ENCODE measurements at regions of chr19 and their contacts with region 1.

Region 1: GRCh38 chr19:7348587-7349230 is at the start of gene ARHGEF18:
- DNase-seq: peak; percentile 34 to 94 (median 72)
- ATAC-seq: peak; percentile 73
- H3K4me3 ChIP-seq: peak within 1 kb of the TSS; percentile 84
- H3K4me3 Mint-ChIP-seq: peak within 1 kb of the TSS; percentile 99
- H3K27ac ChIP-seq: peak within 1 kb of the TSS; percentile 63 to 74
- H3K27ac Mint-ChIP-seq: peak within 1 kb of the TSS; percentile 92
- H3K4me1 ChIP-seq: peaks cover 78% of the 10 kb centered on the region
- H3K4me1 Mint-ChIP-seq: peaks cover 74% of the 10 kb centered on the region
- H3K27me3 ChIP-seq: no peaks in the 10 kb centered on the region
- H3K27me3 Mint-ChIP-seq: no peaks in the 10 kb centered on the region
- CTCF ChIP-seq: no peak
- total RNA-seq, gene ARHGEF18: 121 TPM

Region 2: DNA sequence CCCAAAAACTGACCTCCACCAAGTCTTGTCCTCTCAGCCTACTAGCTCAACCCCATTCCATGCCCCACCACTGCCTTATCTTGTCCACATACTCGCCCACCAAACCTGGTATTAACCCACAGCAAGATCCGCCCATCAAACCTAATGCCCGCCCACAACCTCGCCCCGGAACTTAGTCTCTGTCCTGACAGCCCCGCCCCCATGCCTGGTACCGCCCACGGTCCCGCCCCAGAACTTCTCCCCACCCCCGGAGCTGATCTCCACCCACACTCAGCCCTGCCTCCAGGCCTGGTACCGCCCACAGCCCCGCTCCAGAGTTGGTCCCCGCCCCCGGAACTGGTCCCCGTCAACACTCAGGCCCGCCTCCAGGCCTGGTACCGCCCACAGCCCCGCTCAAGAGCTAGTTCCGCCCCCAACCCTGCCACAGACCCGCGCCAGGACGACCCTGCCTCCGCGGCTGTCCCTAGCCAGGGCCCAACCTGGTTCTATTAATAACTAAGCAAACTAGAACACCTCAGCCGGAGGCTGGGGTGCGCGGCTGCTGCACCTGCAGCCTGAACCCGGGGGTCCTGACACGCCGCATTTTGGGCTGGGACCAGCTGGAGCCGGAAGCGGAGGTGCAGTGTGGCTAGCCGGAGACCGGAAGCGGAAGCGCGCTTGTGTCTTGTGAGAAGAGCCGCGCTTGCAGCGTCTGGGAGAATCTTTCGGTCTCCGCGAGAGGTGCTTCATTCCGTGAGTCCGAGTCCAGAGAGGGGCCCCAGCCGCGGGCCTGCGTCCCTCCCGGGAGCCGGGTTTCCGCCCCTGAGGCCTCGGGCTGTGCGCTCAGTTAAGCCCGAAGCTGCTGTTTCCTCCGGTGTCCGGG is 279.4 kb before region 1 on chr19 and contains the start of gene ZNF557:
- CTCF ChIA-PET with region 1: no interaction called
- POLR2A ChIA-PET with region 1: interaction called, 21 read pairs
- intact Hi-C with region 1: no loop called
- DNase-seq: peak; percentile 98 to 100 (median 99)
- ATAC-seq: peak; percentile 95
- H3K4me3 ChIP-seq: peak within 1 kb of the TSS; percentile 88
- H3K4me3 Mint-ChIP-seq: peak within 1 kb of the TSS; percentile 96
- H3K27ac ChIP-seq: peak within 1 kb of the TSS; percentile 85 to 89
- H3K27ac Mint-ChIP-seq: peak within 1 kb of the TSS; percentile 91
- H3K4me1 ChIP-seq: peaks cover 21% of the 10 kb centered on the region
- H3K4me1 Mint-ChIP-seq: peaks cover 23% of the 10 kb centered on the region
- H3K27me3 ChIP-seq: no peaks in the 10 kb centered on the region
- H3K27me3 Mint-ChIP-seq: no peaks in the 10 kb centered on the region
- CTCF ChIP-seq: no peak
- total RNA-seq, gene ZNF557: 15.8 to 17.4 TPM

Region 3: DNA sequence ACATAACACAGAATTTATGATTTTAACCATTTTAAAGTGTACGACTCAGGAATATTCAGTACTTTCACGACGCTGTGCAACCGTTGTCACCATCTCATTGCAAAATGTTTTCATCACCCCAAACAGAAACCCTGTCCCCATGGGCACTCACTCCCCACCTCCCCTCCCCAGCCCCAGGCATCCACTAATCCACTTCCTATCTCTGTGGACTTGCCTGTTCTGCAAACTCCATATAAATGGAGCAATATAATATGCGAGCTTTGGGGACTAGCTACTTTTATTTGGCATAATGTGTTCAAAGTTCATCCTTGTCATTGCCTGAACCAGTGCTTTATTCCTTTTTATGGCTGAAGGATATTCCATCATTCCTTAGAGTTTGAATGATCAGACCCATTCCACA is 47.2 kb before region 1 on chr19:
- CTCF ChIA-PET with region 1: no interaction called
- POLR2A ChIA-PET with region 1: no interaction called
- intact Hi-C with region 1: no loop called
- DNase-seq: no peak
- ATAC-seq: no peak
- H3K4me3 ChIP-seq: no peak overlapping the region
- H3K4me3 Mint-ChIP-seq: no peak overlapping the region
- H3K27ac ChIP-seq: no peak overlapping the region
- H3K27ac Mint-ChIP-seq: no peak overlapping the region
- H3K4me1 ChIP-seq: no peaks in the 10 kb centered on the region
- H3K4me1 Mint-ChIP-seq: no peaks in the 10 kb centered on the region
- H3K27me3 ChIP-seq: peaks cover 5 to 14% of the 10 kb centered on the region in 2 experiments
- H3K27me3 Mint-ChIP-seq: peaks cover 19% of the 10 kb centered on the region
- CTCF ChIP-seq: no peak

Region 4: DNA sequence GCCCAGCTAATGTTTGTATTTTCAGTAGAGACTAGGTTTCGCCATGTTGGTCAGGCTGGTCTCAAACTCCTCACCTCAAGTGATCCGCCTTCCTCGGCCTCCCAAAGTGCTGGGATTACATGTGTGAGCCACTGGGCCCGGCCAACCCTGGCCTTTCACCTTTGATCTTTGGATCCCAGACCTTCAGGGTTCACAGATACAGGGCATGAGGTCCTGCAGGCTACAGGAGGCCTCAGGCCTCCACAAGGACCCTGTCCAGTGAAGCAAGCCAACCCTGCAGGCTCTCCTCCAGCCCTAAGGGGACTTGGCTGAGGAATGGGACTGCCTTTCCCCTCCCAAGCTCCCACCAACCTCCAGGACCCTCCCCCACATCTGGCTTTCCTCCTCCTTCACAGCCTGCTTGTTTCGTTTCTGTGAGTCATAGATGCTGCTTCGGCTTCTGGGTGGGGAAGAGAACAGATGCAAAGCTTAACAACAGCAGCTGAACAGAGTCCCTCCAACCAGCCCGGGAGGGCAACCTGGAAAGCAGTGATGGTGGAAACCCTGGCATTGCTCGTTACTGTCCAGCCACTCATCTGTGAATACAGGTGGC is 11.8 kb after region 1 on chr19:
- CTCF ChIA-PET with region 1: interaction called, 15 read pairs
- POLR2A ChIA-PET with region 1: interaction called, 36 read pairs
- intact Hi-C with region 1: no loop called
- DNase-seq: no peak
- ATAC-seq: no peak
- H3K4me3 ChIP-seq: no peak overlapping the region
- H3K4me3 Mint-ChIP-seq: no peak overlapping the region
- H3K27ac ChIP-seq: peak overlapping the region in 1 of 2 donors; percentile 15
- H3K27ac Mint-ChIP-seq: peak overlapping the region; percentile 76
- H3K4me1 ChIP-seq: peaks cover 64% of the 10 kb centered on the region
- H3K4me1 Mint-ChIP-seq: peaks cover 64% of the 10 kb centered on the region
- H3K27me3 ChIP-seq: no peaks in the 10 kb centered on the region
- H3K27me3 Mint-ChIP-seq: no peaks in the 10 kb centered on the region
- CTCF ChIP-seq: no peak

Region 5: DNA sequence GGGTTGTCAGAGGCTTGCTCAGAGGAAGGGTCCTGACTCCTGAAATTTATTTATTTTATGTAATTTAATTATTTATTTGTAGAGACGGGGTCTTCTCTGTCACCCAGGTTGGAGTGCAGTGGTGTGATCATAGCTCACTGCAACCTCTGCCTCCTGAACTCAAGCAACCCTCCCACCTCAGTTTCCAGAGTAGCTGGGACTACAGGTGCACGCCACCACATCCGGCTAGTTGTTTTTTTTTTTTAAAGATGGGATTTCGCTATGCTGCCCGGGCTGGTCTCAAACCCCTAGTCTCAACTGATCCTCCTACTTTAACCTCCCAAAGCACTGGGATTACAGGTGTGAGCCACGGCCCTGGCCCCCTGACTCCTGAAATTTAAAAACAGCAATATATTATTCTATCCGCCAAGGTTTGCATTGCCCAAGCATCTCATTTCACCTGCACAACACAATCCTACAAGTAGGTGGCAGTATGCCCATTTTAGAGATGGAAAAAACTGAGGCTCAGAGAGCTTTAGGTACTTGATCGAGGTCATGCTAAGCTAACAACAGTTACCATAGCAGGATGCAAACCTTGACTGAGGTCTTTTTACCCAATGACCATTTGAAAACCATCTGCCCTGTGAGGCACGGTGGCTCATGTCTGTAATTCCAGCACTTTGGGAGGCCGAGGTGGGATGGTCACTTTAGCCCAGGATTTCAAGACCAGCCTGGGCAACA is 18.2 kb after region 1 on chr19:
- CTCF ChIA-PET with region 1: interaction called, 15 read pairs
- POLR2A ChIA-PET with region 1: interaction called, 25 read pairs
- intact Hi-C with region 1: no loop called
- DNase-seq: peak in 3 of 14 experiments; percentile 54 to 60 (median 56)
- ATAC-seq: peak; percentile 67
- H3K4me3 ChIP-seq: no peak overlapping the region
- H3K4me3 Mint-ChIP-seq: no peak overlapping the region
- H3K27ac ChIP-seq: no peak overlapping the region
- H3K27ac Mint-ChIP-seq: peak overlapping the region; percentile 83
- H3K4me1 ChIP-seq: peaks cover 39% of the 10 kb centered on the region
- H3K4me1 Mint-ChIP-seq: peaks cover 47% of the 10 kb centered on the region
- H3K27me3 ChIP-seq: no peaks in the 10 kb centered on the region
- H3K27me3 Mint-ChIP-seq: no peaks in the 10 kb centered on the region
- CTCF ChIP-seq: peak; percentile 55

Region 6: GRCh38 chr19:7394731-7395359 is 46.1 kb after region 1 on chr19:
- CTCF ChIA-PET with region 1: interaction called, 3 read pairs
- POLR2A ChIA-PET with region 1: interaction called, 8 read pairs
- intact Hi-C with region 1: loop called (anchors 5 kb)
- DNase-seq: peak; percentile 77 to 96 (median 87)
- ATAC-seq: peak; percentile 85
- H3K4me3 ChIP-seq: peak overlapping the region; percentile 66
- H3K4me3 Mint-ChIP-seq: peak overlapping the region; percentile 84
- H3K27ac ChIP-seq: peak overlapping the region; percentile 57 to 58
- H3K27ac Mint-ChIP-seq: peak overlapping the region; percentile 76
- H3K4me1 ChIP-seq: peaks cover 52% of the 10 kb centered on the region
- H3K4me1 Mint-ChIP-seq: peaks cover 57% of the 10 kb centered on the region
- H3K27me3 ChIP-seq: no peaks in the 10 kb centered on the region
- H3K27me3 Mint-ChIP-seq: no peaks in the 10 kb centered on the region
- CTCF ChIP-seq: no peak

Region 7: DNA sequence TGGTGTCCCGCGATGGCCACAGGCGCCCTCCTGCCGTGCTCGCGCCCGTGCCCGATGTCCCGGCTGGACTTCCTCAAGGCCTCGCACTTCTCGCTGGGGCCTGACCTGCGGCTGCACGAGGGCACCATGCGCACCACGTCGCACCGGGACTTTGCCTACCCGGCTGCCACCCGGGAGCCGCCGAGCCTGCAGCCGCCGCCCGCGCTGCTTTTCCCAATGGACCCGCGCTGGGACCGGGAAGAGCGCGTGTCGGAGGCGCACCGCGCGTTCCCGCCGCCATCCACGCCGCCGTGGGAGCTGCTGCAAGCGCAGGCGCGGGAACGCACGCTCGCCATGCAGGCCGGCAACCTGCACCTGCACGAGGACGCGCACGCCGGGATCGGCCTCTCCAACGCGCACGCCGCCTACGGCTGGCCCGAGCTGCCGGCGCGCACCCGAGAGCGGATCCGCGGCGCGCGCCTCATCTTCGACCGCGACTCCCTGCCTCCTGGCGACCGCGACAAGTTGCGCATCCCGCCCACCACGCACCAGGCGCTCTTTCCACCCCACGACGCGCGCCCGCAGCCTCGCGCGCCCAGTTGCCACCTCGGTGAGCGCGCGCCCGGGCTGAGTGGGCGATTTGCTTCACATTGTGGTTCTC is 152.2 kb after region 1 on chr19:
- CTCF ChIA-PET with region 1: no interaction called
- POLR2A ChIA-PET with region 1: no interaction called
- intact Hi-C with region 1: no loop called
- DNase-seq: peak in 7 of 14 experiments; percentile 26 to 60 (median 40)
- ATAC-seq: peak; percentile 39
- H3K4me3 ChIP-seq: no peak overlapping the region
- H3K4me3 Mint-ChIP-seq: no peak overlapping the region
- H3K27ac ChIP-seq: no peak overlapping the region
- H3K27ac Mint-ChIP-seq: no peak overlapping the region
- H3K4me1 ChIP-seq: peaks cover 23% of the 10 kb centered on the region
- H3K4me1 Mint-ChIP-seq: peaks cover 8% of the 10 kb centered on the region
- H3K27me3 ChIP-seq: peaks cover 30 to 32% of the 10 kb centered on the region in 2 experiments
- H3K27me3 Mint-ChIP-seq: peaks cover 64% of the 10 kb centered on the region
- CTCF ChIP-seq: no peak

Region 8: GRCh38 chr19:7629347-7630054 is 280.8 kb after region 1 on chr19 and contains the starts of genes PET100 and XAB2:
- CTCF ChIA-PET with region 1: no interaction called
- POLR2A ChIA-PET with region 1: interaction called, 13 read pairs
- intact Hi-C with region 1: no loop called
- DNase-seq: peak; percentile 88 to 99 (median 94)
- ATAC-seq: peak; percentile 97
- H3K4me3 ChIP-seq: peak within 1 kb of the TSS; percentile 72
- H3K4me3 Mint-ChIP-seq: peak within 1 kb of the TSS; percentile 95
- H3K27ac ChIP-seq: peak within 1 kb of the TSS; percentile 92 to 94
- H3K27ac Mint-ChIP-seq: peak within 1 kb of the TSS; percentile 96
- H3K4me1 ChIP-seq: peaks cover 44% of the 10 kb centered on the region
- H3K4me1 Mint-ChIP-seq: peaks cover 34% of the 10 kb centered on the region
- H3K27me3 ChIP-seq: no peaks in the 10 kb centered on the region
- H3K27me3 Mint-ChIP-seq: no peaks in the 10 kb centered on the region
- CTCF ChIP-seq: no peak
- total RNA-seq, gene PET100: 178 to 188 TPM
- total RNA-seq, gene XAB2: 118 to 121 TPM